ENCODE measurements at regions of chr7 and their contacts with region 1.

Region 1: DNA sequence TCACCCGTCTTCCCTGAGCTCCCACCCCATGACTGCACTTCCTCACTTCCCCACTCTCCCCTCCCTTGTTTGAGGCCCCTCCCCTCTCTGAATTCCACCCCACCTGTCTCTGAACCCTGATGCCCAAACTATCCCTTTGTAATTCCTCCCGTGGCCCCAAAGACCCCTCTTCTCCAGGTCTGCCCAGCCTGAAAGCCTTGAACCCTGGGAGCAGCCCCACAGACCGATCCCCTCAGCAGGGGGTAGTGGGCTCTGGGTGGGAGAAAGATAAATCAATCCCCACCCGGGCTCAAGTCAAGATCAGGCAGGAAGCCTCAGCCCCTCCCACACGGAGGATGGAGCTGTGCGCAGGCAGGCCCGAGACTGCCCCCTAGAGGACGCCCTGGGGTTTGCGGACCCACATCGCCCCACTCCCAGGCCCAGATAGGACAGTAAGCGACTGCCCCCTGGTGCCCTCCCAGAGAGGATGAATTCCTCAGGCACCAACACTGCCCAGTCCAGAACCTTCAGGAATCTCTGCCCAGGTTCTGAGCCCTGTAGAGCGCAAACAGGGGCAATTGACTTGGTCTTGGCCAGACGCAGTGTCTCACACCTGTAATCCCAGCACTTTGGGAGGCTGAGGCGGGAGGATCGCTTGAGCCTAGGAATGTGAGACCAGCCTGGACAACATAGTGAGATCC is 11.7 kb downstream of the HSPB1 start:
- DNase-seq: peak; percentile 99

Region 2: DNA sequence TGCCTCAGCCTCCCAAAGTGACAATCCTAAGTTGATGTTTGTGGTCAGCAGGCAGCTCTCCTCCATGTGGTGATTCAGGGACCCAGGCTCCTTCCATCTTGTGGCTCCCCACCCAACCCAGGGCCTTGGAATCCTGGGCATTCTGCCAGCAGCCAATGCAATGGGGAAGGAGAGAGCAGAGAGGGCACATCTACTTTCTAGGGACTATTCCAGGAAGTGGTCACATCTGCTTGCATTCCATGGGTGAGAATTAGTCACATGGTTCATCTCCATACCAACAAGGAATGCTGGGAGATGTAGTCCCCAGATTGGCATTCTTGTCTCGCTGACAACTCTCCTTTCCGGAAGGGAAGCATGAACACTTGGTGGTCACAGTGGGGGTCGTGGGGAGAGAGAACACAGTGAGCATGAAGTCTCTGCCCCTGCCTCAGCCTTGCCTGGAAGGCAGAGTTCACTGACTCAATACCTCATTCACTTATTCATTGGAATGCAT is 122.4 kb before region 1 on chr7:
- intact Hi-C with region 1: no loop called
- DNase-seq: no peak

Region 3: DNA sequence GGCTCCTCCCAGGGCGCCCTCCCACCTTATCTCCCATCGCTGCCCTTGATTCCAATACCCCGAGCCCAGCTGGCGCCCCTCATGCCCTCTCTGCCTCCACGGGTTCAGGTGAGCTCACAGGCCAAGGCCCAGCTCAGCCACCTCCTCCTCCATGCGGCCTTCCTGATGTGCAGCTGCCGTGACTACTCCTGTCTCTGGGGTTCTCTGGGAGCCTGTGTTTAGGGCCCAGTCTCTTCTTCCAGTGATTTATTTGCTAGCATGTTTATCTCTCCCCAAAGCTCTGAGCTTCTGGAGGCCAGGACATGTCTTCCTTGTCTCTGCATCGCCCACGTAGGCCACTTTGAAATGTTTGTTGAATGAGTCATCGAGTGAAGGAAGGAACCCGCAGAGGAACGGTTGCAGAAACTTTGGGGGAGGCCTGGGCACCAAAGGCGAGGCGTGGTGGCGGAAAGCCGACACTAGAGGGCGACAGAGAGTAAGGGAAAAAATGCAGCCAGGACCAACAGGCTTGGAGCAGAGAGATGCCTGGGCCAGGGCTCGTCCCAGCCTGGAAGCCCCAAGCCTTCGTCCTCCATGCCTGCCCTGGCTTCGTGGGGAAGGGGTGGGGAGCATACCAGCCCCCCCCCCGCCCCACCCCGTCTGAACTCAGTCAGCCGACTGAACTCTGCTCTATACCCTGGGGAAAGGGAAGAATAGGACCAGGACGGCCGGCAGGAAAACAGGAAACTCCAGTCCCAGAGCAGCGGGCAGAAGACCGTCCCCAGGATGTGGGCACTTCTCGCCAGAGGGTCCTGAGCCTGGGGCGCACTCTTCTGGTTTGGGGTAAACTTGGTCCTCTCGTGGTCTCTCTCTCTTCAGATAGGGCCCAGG is 22.6 kb before region 1 on chr7:
- intact Hi-C with region 1: loop called in 1 of 2 experiments (anchors 2 kb)
- DNase-seq: peak; percentile 98

Measured in posterior vena cava (tissue), 2 donors.